CD4-positive, alpha-beta memory T cell (primary cell): ENCODE measurements at regions of chr10 and their contacts with region 1.

Region 1: DNA sequence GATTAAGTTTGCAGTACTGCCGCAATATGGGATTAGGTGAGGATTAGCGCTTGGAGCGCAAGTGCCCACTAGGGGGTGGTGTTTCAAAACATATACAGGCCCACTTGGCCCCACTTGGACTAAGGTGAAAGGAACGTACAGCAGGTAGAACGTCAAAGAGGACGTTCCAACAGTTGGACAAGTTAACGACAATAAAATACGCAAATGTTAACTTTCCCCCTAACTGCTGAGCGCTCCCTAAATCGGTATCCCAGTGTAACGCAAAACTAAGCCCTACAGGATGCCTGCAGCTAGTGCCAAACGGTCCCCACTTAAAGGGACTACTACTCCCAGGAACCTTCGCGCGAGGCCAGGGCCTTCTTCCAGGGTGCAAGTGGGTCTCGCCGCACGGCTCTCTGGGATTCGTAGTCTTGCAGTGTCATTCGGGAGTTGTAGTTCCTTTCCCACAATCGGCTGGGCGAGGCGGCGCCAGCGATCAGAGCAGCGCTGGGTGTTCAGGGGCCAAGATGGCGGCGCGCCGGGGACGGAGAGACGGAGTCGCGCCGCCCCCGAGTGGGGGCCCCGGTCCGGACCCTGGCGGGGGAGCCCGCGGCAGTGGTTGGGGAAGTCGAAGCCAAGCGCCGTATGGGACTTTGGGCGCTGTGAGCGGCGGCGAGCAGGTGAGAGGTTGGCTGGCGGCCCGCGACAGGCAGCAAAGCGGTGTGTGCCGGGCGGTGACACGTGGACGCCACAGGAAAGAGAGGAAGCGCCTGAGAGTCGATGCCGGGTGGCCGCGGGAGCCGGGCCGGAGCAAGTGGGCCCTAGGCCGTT is at the start of gene PPRC1:
- DNase-seq: peak; percentile 97 to 99 (median 97)
- H3K4me3 ChIP-seq: peak within 1 kb of the TSS; percentile 55 to 61
- H3K4me3 Mint-ChIP-seq: peak within 1 kb of the TSS; percentile 92 to 99 (median 96)
- H3K27ac ChIP-seq: peak within 1 kb of the TSS; percentile 88
- H3K27ac Mint-ChIP-seq: peak within 1 kb of the TSS; percentile 93 to 99 (median 96)
- H3K4me1 ChIP-seq: peaks cover 38% of the 10 kb centered on the region
- H3K4me1 Mint-ChIP-seq: peaks cover 27 to 50% (median 38%) of the 10 kb centered on the region in 4 donors
- H3K27me3 ChIP-seq: no peaks in the 10 kb centered on the region
- H3K27me3 Mint-ChIP-seq: no peaks in the 10 kb centered on the region
- total RNA-seq, gene PPRC1: 38.9 to 39.8 TPM

Region 2: DNA sequence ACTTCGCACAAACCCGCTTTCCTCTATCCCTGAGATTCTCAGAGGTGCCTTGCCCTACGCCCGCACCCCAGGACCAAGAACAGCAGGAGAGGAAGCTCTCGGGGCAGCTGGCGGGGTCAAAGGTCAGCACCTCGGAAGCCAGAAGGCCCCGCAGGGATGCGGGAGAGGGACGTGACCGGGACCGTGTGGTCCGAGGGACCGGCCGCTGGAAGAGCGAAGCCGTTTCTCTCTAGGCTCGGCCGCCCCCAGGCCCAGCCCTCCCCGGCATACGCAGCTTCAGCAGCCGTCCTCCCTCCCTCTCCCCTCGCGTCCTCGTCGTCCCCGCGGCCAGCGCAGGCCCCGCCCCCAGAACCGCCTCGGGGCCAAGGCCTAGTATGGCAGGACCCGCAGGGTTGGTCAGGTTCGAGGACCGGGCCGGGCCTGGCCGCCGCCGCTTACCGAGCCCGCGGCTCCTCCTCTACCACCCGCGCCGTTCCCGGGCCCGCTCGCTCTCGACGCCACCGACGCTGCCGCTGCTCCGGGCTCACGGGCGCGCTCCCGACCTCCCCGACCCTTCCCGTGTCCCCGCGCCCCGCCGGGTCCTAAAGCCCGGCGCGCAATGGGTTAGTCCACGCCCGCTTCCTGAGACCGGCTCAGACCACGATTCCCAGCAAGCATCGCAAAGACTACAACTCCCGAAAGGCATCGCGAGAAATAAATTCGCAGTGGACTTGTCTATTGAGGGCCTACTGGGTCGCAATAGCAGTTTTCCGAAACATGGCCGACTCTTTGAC is 76.9 kb before region 1 on chr10 and contains the start of gene ARMH3:
- CTCF ChIA-PET with region 1: interaction called, 3 read pairs
- POLR2A ChIA-PET with region 1: no interaction called
- intact Hi-C with region 1: loop called (anchors 1 kb)
- DNase-seq: peak; percentile 89 to 92 (median 90)
- H3K4me3 ChIP-seq: peak within 1 kb of the TSS; percentile 89 to 99
- H3K4me3 Mint-ChIP-seq: peak within 1 kb of the TSS; percentile 95 to 98 (median 96)
- H3K27ac ChIP-seq: peak within 1 kb of the TSS; percentile 88
- H3K27ac Mint-ChIP-seq: peak within 1 kb of the TSS; percentile 94 to 99 (median 97)
- H3K4me1 ChIP-seq: peaks cover 51% of the 10 kb centered on the region
- H3K4me1 Mint-ChIP-seq: peaks cover 31 to 54% (median 42%) of the 10 kb centered on the region in 4 donors
- H3K27me3 ChIP-seq: no peaks in the 10 kb centered on the region
- H3K27me3 Mint-ChIP-seq: no peaks in the 10 kb centered on the region
- total RNA-seq, gene ARMH3: 31.4 to 31.8 TPM

Region 3: GRCh38 chr10:102114861-102115618 is 17.7 kb before region 1 on chr10:
- CTCF ChIA-PET with region 1: interaction called, 8 read pairs
- POLR2A ChIA-PET with region 1: interaction called, 24 read pairs
- intact Hi-C with region 1: loop called (anchors 1 kb)
- DNase-seq: peak; percentile 69 to 86 (median 73)
- H3K4me3 ChIP-seq: peak overlapping the region; percentile 50 to 54
- H3K4me3 Mint-ChIP-seq: peak overlapping the region; percentile 85 to 97 (median 93)
- H3K27ac ChIP-seq: peak overlapping the region; percentile 90
- H3K27ac Mint-ChIP-seq: peak overlapping the region; percentile 89 to 97 (median 96)
- H3K4me1 ChIP-seq: peaks cover 67% of the 10 kb centered on the region
- H3K4me1 Mint-ChIP-seq: peaks cover 44 to 77% (median 61%) of the 10 kb centered on the region in 4 donors
- H3K27me3 ChIP-seq: no peaks in the 10 kb centered on the region
- H3K27me3 Mint-ChIP-seq: no peaks in the 10 kb centered on the region

Region 4: DNA sequence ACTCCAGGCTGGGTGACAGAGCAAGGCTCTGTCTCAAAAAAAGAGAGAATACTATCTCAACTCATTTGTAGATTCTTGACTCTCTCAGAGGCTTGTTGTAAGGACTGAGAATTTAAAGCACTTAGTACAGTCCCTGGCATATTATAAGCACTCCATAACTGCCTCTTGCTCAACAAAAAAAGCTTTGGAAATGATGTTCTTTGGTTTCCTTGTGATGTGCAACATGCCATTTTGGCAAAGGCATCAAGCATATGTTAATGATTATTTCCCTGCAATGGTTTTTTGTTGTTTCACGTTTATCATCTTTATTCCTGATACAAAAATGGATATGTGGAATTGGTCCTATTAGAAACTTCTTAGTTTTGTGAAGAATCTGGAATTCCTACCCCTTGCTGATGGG is 35.1 kb after region 1 on chr10:
- CTCF ChIA-PET with region 1: interaction called, 10 read pairs
- POLR2A ChIA-PET with region 1: no interaction called
- intact Hi-C with region 1: loop called (anchors 1 kb)
- DNase-seq: no peak
- H3K4me3 ChIP-seq: no peak overlapping the region
- H3K4me3 Mint-ChIP-seq: no peak overlapping the region
- H3K27ac ChIP-seq: no peak overlapping the region
- H3K27ac Mint-ChIP-seq: peak overlapping the region in 1 of 7 donors; percentile 36
- H3K4me1 ChIP-seq: peaks cover 4% of the 10 kb centered on the region
- H3K4me1 Mint-ChIP-seq: peaks cover 4 to 11% (median 6%) of the 10 kb centered on the region in 4 donors
- H3K27me3 ChIP-seq: no peaks in the 10 kb centered on the region
- H3K27me3 Mint-ChIP-seq: no peaks in the 10 kb centered on the region

Region 5: DNA sequence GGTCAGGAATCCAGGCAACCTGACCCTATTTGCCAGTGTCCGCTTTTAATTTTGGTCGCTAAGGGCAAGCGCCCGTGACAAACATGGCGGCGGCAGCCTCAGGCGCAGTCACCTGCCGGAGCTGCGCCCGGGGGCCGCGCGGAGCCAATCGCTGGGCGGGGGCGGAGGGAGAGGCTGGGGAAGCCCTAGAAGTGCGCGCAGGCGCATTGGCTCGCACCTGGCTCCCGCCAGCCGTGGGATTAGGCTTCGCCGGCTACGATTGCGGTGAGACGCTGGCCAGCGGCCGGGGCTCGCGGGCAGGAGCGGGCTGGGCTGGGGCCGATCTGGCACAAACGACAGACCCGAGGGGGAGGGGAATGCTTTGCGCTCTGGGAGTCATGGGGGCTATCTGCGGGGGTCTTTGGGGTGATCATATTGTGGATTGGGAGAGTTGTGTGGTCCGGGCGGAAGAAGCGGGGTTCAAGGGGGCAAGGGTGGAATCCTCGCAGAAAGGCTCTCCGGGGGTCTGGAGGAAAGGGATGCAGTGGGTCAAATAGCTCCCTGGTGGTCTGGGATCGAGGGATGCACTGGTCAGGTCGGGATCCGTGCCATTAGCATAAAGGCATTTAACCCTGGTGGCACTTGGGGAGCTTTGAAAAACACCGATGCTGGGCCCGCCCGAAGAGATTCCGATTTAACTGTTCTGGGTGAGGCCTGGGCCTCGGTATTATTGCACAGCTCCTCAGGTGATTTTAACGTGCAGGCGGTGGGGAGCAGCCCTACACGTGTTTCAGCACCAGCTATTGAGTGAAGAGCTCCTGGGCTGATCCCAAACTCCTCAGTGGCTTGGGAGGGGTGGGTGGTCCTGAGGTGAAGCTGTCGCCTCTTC is 328.7 kb after region 1 on chr10:
- CTCF ChIA-PET with region 1: no interaction called
- POLR2A ChIA-PET with region 1: no interaction called
- intact Hi-C with region 1: loop called (anchors 5 kb)
- DNase-seq: peak; percentile 90 to 91 (median 91)
- H3K4me3 ChIP-seq: peak overlapping the region; percentile 52 to 85
- H3K4me3 Mint-ChIP-seq: peak overlapping the region; percentile 83 to 95 (median 90)
- H3K27ac ChIP-seq: peak overlapping the region; percentile 70
- H3K27ac Mint-ChIP-seq: peak overlapping the region; percentile 75 to 95 (median 87)
- H3K4me1 ChIP-seq: peaks cover 16% of the 10 kb centered on the region
- H3K4me1 Mint-ChIP-seq: peaks cover 16 to 38% (median 23%) of the 10 kb centered on the region in 4 donors
- H3K27me3 ChIP-seq: no peaks in the 10 kb centered on the region
- H3K27me3 Mint-ChIP-seq: no peaks in the 10 kb centered on the region